ENCODE measurements at regions of chr4 and their contacts with region 1.

Region 1: GRCh38 chr4:102826890-102827673 is at the start of gene UBE2D3:
- DNase-seq: peak; percentile 93 to 95 (median 93)
- ATAC-seq: peak; percentile 60 to 76 (median 74)
- H3K4me3 ChIP-seq: peak within 1 kb of the TSS; percentile 69 to 86 (median 76)
- H3K27ac ChIP-seq: peak within 1 kb of the TSS; percentile 100
- H3K4me1 ChIP-seq: peaks cover 0 to 32% (median 13%) of the 10 kb centered on the region in 4 donors
- H3K27me3 ChIP-seq: no peaks in the 10 kb centered on the region
- CTCF ChIP-seq: peak in 2 of 4 donors; percentile 11 to 14
- POLR2A ChIP-seq: peak; percentile 90
- total RNA-seq, gene UBE2D3: 127 to 304 (median 190) TPM

Region 2: GRCh38 chr4:102868781-102869568 is 41.9 kb after region 1 on chr4 and contains the start of gene CISD2:
- intact Hi-C with region 1: loop called in 1 of 2 experiments (anchors 5 kb)
- DNase-seq: peak; percentile 95 to 96 (median 96)
- ATAC-seq: peak; percentile 91 to 97 (median 94)
- H3K4me3 ChIP-seq: peak within 1 kb of the TSS; percentile 71 to 80 (median 73)
- H3K27ac ChIP-seq: peak within 1 kb of the TSS; percentile 89 to 97 (median 96)
- H3K4me1 ChIP-seq: peaks cover 0 to 14% (median 9%) of the 10 kb centered on the region in 4 donors
- H3K27me3 ChIP-seq: no peaks in the 10 kb centered on the region
- CTCF ChIP-seq: no peak
- POLR2A ChIP-seq: peak; percentile 92
- total RNA-seq, gene CISD2: 29.8 to 34.7 (median 33.1) TPM

Region 3: DNA sequence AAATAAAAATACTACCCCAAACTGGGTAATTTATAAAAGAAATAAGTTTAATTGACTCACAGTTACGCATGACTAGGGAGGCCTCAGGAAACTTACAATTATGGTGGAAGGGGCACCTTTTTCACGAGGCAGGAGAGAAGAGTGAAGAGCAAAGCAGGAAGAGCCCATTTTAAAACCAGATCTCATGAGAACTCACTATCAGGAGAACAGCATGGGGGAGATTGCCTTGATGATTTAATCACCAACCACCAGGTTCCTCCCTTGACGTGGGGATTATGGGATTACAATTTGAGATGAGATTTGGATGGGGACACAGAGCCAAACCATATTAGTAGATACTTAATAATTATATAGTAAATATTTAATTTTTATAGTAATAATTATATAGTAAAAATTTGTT is 51.8 kb after region 1 on chr4:
- intact Hi-C with region 1: loop called in 1 of 2 experiments (anchors 5 kb)
- DNase-seq: no peak
- ATAC-seq: peak; percentile 13 to 52 (median 28)
- H3K4me3 ChIP-seq: no peak overlapping the region
- H3K27ac ChIP-seq: peak overlapping the region; percentile 74 to 86 (median 79)
- H3K4me1 ChIP-seq: peaks cover 0 to 19% (median 4%) of the 10 kb centered on the region in 4 donors
- H3K27me3 ChIP-seq: no peaks in the 10 kb centered on the region
- CTCF ChIP-seq: no peak
- POLR2A ChIP-seq: no peak

Region 4: GRCh38 chr4:103354006-103354405 is 526.9 kb after region 1 on chr4:
- intact Hi-C with region 1: no loop called
- DNase-seq: no peak
- ATAC-seq: no peak
- H3K4me3 ChIP-seq: no peak overlapping the region
- H3K27ac ChIP-seq: no peak overlapping the region
- H3K4me1 ChIP-seq: no peaks in the 10 kb centered on the region
- H3K27me3 ChIP-seq: no peaks in the 10 kb centered on the region
- CTCF ChIP-seq: no peak
- POLR2A ChIP-seq: no peak

Measured in right lobe of liver (tissue), 6 donors.